ENCODE measurements at regions of chr6 and their contacts with region 1.

Region 1: GRCh38 chr6:154749341-154749740 is 16.1 kb downstream of the SCAF8 start:
- DNase-seq: no peak
- H3K4me3 Mint-ChIP-seq: no peak overlapping the region
- H3K27ac Mint-ChIP-seq: no peak overlapping the region
- H3K4me1 Mint-ChIP-seq: peaks cover 63% of the 10 kb centered on the region
- H3K27me3 Mint-ChIP-seq: no peaks in the 10 kb centered on the region

Region 2: GRCh38 chr6:154738551-154738961 is 10.8 kb before region 1 on chr6:
- CTCF ChIA-PET with region 1: interaction called, 3 read pairs
- POLR2A ChIA-PET with region 1: interaction called, 5 read pairs
- intact Hi-C with region 1: loop called (anchors 1 kb)
- DNase-seq: no peak
- H3K4me3 Mint-ChIP-seq: peak overlapping the region; percentile 9
- H3K27ac Mint-ChIP-seq: peak overlapping the region; percentile 20
- H3K4me1 Mint-ChIP-seq: peaks cover 62% of the 10 kb centered on the region
- H3K27me3 Mint-ChIP-seq: no peaks in the 10 kb centered on the region